ENCODE measurements at regions of chr5 and their contacts with region 1.

Region 1: GRCh38 chr5:38556599-38557305 is at the start of gene LIFR:
- DNase-seq: peak; percentile 68 to 86 (median 84)
- H3K4me3 ChIP-seq: peak within 1 kb of the TSS; percentile 70 to 98 (median 90)
- H3K27ac ChIP-seq: peak within 1 kb of the TSS; percentile 91 to 100 (median 99)
- H3K27me3 ChIP-seq: no peaks in the 10 kb centered on the region
- CTCF ChIP-seq: peak in 19 of 56 donors; percentile 7 to 40 (median 17)
- total RNA-seq, gene LIFR: 63.9 to 237 (median 123) TPM

Region 2: GRCh38 chr5:38680094-38680825 is 123.5 kb after region 1 on chr5:
- intact Hi-C with region 1: loop called (anchors 1 to 5 kb)
- DNase-seq: peak in 3 of 10 donors; percentile 38 to 62 (median 44)
- H3K4me3 ChIP-seq: no peak overlapping the region
- H3K27ac ChIP-seq: peak overlapping the region in 58 of 59 donors; percentile 61 to 99 (median 94)
- H3K27me3 ChIP-seq: no peaks in the 10 kb centered on the region
- CTCF ChIP-seq: peak in 2 of 56 donors; percentile 9 to 27

Region 3: GRCh38 chr5:38719916-38720315 is 163.2 kb after region 1 on chr5:
- intact Hi-C with region 1: loop called in 1 of 2 experiments (anchors 5 kb)
- DNase-seq: no peak
- H3K4me3 ChIP-seq: no peak overlapping the region
- H3K27ac ChIP-seq: peak overlapping the region in 27 of 59 donors; percentile 0 to 83 (median 43)
- H3K27me3 ChIP-seq: no peaks in the 10 kb centered on the region
- CTCF ChIP-seq: no peak

Region 4: DNA sequence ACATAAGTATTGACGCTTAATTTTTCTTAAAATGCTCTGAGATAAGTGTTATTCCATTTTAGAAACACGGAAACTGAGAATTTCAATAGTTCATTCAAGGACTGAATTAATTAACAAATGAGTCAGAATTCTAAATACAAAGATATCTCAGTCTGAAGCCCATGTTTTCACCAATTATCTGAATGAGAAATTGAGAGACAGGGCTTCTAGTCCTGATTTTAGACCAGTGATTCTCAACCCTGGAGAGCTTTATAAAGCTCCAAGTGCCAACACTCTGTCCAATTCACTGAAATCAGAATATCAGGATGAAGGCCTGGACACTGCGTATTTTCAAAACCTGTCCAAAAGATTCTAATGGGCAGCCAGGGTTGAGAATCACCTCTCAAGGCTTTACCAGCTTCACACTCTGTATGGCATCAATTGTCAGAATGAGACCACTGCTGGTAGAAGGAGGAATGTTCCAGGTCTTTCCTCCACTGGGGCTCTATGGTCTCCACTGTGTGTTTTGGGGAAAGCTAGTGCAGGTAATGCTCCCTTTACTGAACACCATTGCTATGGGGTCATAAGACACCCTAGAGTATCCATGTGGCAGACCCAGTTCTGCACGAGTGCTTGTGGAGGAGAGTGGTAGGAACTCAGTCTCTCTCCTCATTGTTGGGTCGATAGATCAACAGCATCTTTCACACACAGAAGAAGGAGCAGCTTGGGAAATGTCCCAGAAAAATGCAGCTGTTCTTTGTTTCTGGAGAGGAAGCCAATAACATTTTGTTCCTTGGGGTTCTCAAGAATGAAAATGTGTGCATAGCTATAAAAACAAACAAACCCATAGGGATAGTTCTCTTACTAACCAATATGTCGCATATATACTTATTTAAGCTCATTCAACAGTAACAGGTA is 189.3 kb after region 1 on chr5:
- intact Hi-C with region 1: loop called in 1 of 2 experiments (anchors 5 kb)
- DNase-seq: no peak
- H3K4me3 ChIP-seq: peak overlapping the region in 5 of 59 donors; percentile 9 to 35 (median 15)
- H3K27ac ChIP-seq: peak overlapping the region in 57 of 59 donors; percentile 34 to 95 (median 84)
- H3K27me3 ChIP-seq: no peaks in the 10 kb centered on the region
- CTCF ChIP-seq: peak in 3 of 56 donors; percentile 3 to 7 (median 6)

Region 5: DNA sequence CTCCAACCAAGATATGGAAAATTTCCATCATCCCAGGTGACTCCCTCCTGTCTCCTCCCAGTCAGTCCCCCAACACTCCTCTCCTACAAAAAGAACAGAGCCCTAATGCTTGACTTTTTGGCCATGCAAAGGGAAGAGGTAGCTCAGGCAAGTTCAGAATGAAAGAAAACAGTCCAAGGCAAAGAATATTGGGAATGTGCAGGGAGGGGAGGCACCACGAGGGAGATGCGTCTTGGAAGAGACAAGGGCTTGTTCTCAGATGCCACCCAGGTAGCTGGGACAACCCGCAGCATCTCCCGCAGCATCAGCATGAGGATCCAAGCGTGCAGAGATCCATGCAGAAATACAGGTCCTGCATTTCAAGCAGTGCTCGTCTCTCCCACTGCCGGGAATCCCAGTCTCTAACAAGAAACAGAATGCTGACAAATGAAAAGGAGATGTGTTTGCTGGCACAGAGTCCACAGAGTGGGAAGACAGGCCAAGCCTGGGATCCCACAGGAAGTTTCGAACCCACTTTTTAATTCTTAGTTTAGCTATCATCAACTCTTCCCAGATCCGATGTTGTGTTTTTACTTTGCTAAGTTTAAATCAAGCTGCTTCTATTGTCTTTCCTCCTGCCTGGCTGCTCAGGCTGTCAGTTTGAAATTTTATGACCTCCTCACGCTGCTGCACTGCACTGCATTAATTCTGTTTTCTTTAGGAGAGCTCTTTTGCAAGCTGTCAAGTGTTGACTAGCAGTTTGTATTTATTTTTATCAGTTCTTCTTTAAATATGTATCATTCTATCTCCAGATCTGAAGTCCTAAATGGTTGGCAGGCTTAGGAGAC is 202.2 kb after region 1 on chr5:
- intact Hi-C with region 1: no loop called
- DNase-seq: no peak
- H3K4me3 ChIP-seq: peak overlapping the region in 27 of 59 donors; percentile 7 to 49 (median 26)
- H3K27ac ChIP-seq: no peak overlapping the region
- H3K27me3 ChIP-seq: peaks cover 0 to 3% (median 0%) of the 10 kb centered on the region in 45 donors
- CTCF ChIP-seq: no peak

Region 6: GRCh38 chr5:38780950-38781349 is 224.2 kb after region 1 on chr5:
- intact Hi-C with region 1: loop called in 1 of 2 experiments (anchors 10 kb)
- DNase-seq: peak in 8 of 10 donors; percentile 37 to 58 (median 53)
- H3K4me3 ChIP-seq: no peak overlapping the region
- H3K27ac ChIP-seq: no peak overlapping the region
- H3K27me3 ChIP-seq: no peaks in the 10 kb centered on the region
- CTCF ChIP-seq: peak in 52 of 56 donors; percentile 14 to 71 (median 44)

Region 7: GRCh38 chr5:38809388-38810359 is 252.9 kb after region 1 on chr5:
- intact Hi-C with region 1: loop called (anchors 5 to 10 kb)
- DNase-seq: peak; percentile 68 to 89 (median 82)
- H3K4me3 ChIP-seq: peak overlapping the region in 1 of 59 donors; percentile 9
- H3K27ac ChIP-seq: peak overlapping the region in 11 of 59 donors; percentile 3 to 66 (median 35)
- H3K27me3 ChIP-seq: peaks cover 0 to 5% (median 0%) of the 10 kb centered on the region in 45 donors
- CTCF ChIP-seq: peak; percentile 66 to 97 (median 90)

Region 8: GRCh38 chr5:39424736-39425637 is 868.2 kb after region 1 on chr5 and contains the start of gene DAB2:
- intact Hi-C with region 1: no loop called
- DNase-seq: peak; percentile 40 to 68 (median 52)
- H3K4me3 ChIP-seq: peak within 1 kb of the TSS; percentile 41 to 83 (median 67)
- H3K27ac ChIP-seq: peak within 1 kb of the TSS in 53 of 59 donors; percentile 6 to 89 (median 62)
- H3K27me3 ChIP-seq: peaks cover 0 to 15% (median 0%) of the 10 kb centered on the region in 45 donors
- CTCF ChIP-seq: peak in 51 of 56 donors; percentile 3 to 62 (median 49)
- total RNA-seq, gene DAB2: 7.5 to 46.1 (median 14.3) TPM